Psoas muscle (tissue), 8 donors: ENCODE measurements at regions of chrX and their contacts with region 1.

Region 1: DNA sequence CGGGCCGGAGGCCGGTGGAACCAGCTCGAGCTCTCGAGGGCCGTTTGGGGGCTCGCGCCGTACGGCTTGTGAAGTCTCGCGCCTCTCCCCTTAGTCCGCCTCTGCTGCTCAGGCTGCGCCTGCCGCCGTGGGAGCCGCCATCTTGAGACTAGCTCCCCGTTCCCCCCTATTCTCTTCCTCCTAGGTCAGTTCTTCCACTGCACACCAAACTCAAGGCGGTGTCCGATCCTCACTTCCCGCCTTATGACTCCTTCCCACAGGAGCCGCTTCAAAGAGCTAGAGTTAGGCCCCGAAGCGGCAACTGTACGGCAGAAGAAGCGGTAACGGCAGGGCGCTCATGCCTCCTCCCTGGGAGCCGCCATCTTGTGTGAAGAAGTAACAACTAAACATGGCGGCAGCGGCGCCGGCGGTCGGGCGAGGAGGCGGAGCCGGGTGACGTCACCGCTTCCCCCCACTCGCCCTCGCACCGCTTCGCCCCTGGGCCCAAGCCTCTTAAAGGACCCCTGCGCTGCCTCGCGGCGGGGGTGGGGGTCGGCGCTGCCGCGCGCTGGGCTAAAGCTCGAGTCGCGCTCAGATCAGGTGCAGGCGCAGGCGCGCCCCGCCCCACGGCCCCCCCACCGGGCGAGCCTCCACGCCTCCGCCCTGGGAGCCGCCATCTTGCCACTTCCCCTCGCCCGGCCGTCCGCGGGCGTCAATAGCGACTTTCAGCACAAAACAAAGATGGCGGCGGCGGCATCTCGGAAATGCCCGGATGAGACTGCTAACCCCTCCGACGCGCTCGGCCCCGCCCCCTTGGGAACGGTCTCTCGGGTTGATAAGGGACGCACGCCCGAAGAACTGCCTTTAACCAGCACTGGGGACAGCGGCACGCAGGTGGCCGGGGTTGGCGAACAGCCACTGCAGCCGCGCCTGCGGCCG is at the start of gene HCFC1:
- DNase-seq: peak; percentile 95 to 98
- ATAC-seq: peak; percentile 75 to 80 (median 79)
- H3K4me3 ChIP-seq: peak within 1 kb of the TSS; percentile 80
- H3K27ac ChIP-seq: peak within 1 kb of the TSS; percentile 97
- H3K4me1 ChIP-seq: peaks cover 41% of the 10 kb centered on the region
- H3K27me3 ChIP-seq: no peaks in the 10 kb centered on the region
- CTCF ChIP-seq: no peak
- total RNA-seq, gene HCFC1: 29.8 to 50.1 (median 40.0) TPM

Region 2: GRCh38 chrX:153782313-153782712 is 189.4 kb before region 1 on chrX:
- intact Hi-C with region 1: loop called in 1 of 2 experiments (anchors 5 kb)
- DNase-seq: no peak
- ATAC-seq: peak; percentile 16 to 57 (median 31)
- H3K4me3 ChIP-seq: peak overlapping the region; percentile 56
- H3K27ac ChIP-seq: peak overlapping the region; percentile 87
- H3K4me1 ChIP-seq: no peaks in the 10 kb centered on the region
- H3K27me3 ChIP-seq: no peaks in the 10 kb centered on the region
- CTCF ChIP-seq: no peak